Naive thymus-derived CD8-positive, alpha-beta T cell (primary cell): ENCODE measurements at regions of chr17 and their contacts with region 1.

Region 1: DNA sequence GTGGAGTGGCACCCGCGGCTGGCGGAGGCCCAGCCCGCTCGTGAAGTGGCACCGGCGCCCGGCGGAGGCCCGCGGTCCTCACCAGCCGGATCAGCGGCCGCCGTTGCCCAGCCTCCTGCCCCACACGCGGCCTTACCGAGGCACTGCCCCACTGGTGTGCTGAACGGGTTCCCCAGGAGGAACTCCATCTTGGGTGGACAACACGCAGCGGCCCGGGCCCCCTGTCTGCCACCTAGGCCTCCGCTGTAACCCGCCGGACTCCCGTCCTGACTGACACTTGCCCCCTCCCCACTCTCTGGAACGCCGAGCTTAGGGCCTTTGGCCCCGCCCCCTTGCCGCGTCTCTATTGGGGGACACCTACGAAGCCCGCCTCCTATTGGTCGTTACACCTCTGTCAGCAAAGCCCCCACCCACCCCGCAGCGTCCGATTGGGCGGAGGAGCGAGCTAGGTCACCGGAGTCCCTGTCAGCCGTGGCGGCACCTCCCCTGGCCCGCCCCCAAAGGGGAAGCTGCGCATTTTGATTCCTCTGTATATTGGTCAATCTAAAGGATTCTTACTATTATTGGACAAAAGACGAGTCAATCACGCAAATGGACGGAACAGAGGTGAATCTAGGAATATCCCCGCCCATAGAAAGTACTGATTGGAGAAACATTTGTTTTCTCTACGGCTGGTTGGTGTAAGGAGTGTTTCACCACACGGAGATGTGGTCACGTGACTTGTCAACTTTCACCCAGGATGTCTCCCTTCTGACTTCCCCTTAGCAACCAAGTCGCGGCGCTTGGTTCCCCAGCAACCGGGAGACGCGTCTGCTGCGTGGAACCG is at the starts of genes DRC3 and TOM1L2:
- DNase-seq: peak; percentile 97 to 100 (median 100)
- ATAC-seq: peak; percentile 87 to 90
- H3K4me3 Mint-ChIP-seq: peak within 1 kb of the TSS; percentile 89 to 99 (median 95)
- H3K27ac Mint-ChIP-seq: peak within 1 kb of the TSS; percentile 81 to 99 (median 96)
- H3K4me1 Mint-ChIP-seq: peaks cover 20 to 52% (median 48%) of the 10 kb centered on the region in 4 donors
- H3K27me3 Mint-ChIP-seq: no peaks in the 10 kb centered on the region
- polyA plus RNA-seq, gene DRC3: 0.31 to 0.91 TPM in 2 of 3 donors, not detected in the other
- polyA plus RNA-seq, gene TOM1L2: 2.5 to 11.6 (median 7.4) TPM

Region 2: DNA sequence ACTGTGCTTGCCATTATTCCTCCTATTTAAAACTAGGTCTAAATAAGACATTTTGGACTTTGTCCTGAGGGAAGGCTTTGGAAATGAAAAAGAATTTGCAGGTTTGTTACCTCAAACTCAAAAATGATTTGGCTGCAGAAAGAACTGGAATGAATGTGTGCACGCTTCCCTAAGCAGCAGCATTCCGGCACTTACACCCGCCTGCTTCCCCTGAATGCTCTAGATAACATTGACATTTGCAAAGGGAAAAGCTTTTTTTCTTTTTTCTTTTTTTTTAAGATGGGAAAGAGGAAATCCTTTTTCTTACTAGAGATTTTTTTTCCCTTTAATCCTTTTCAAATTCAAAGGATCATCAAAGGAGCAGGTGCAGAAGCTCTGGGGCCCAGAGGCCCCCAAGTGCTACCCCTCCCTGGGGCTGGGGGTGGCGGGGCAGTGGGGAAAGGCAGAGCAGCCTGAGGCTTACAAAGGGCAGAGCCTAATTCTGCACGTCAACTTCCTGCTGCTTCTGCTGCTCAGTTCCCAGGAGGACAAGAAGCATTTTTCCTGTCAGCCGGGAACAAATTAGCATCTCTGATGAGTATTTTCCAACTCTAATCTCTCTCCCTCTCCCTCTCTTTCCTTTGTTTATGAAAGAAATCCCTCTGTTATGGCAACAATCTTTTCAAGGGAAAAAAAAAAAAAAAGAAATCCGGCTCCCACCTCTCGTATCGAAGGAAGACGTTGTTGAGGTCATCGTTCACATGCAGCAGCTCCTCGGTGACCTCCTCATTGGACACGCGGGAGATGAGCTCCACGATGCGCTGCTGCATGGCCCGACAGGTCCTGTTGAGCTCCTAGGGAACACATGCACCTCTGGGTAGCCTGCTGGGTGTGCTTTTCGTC is 103.5 kb before region 1 on chr17:
- POLR2A ChIA-PET with region 1: no interaction called
- DNase-seq: no peak
- ATAC-seq: no peak
- H3K4me3 Mint-ChIP-seq: no peak overlapping the region
- H3K27ac Mint-ChIP-seq: peak overlapping the region in 1 of 10 donors; percentile 58
- H3K4me1 Mint-ChIP-seq: peaks cover 0 to 11% (median 3%) of the 10 kb centered on the region in 4 donors
- H3K27me3 Mint-ChIP-seq: no peaks in the 10 kb centered on the region

Region 3: DNA sequence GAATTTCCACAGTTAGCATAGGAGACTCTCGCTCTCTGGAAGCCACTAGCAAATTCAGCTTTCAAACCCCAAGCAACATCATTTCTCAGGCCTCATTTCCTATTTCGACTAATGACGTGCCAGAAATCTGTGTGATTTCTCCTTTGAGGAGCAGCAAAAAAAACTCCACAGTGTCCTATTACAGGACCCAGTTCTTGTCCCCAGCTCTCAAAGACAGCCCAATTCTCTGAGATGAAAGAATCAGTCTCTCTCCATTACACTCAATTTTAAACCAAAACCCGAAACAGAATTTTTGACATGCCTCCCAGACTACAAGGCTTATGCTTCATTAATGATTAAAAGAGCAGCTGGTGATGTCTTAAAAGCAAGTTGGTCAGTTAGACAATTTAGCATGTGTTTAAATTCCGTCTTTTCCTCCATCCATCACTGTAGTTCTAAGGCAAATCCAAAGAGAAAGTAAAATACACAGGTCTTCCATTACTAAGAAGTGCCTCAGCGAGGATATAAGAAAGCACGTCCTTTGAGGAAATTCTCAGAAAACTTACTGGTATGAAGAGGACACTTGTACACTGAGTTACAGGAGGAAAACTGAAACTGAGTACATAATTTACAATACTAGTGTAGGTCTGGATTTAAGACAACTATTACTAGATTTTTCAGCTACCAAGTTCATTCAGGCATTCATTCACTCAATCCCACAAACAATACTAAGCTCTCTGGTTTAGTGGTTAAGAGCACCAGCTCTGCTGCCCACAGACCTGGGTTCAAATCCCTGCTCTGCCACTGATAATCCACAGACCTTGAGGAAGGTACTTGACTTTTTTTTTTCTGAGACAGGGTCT is 12.6 kb before region 1 on chr17:
- POLR2A ChIA-PET with region 1: interaction called, 130 read pairs
- DNase-seq: peak in 2 of 10 donors; percentile 27 to 31
- ATAC-seq: peak; percentile 15 to 44
- H3K4me3 Mint-ChIP-seq: peak overlapping the region; percentile 70 to 93 (median 82)
- H3K27ac Mint-ChIP-seq: peak overlapping the region; percentile 95 to 99 (median 98)
- H3K4me1 Mint-ChIP-seq: peaks cover 45 to 76% (median 75%) of the 10 kb centered on the region in 4 donors
- H3K27me3 Mint-ChIP-seq: no peaks in the 10 kb centered on the region

Region 4: GRCh38 chr17:17994271-17995069 is 22.1 kb after region 1 on chr17:
- POLR2A ChIA-PET with region 1: no interaction called
- DNase-seq: peak in 9 of 10 donors; percentile 7 to 54 (median 30)
- ATAC-seq: peak; percentile 73 to 78
- H3K4me3 Mint-ChIP-seq: no peak overlapping the region
- H3K27ac Mint-ChIP-seq: peak overlapping the region in 4 of 10 donors; percentile 6 to 73 (median 33)
- H3K4me1 Mint-ChIP-seq: peaks cover 0 to 7% (median 2%) of the 10 kb centered on the region in 4 donors
- H3K27me3 Mint-ChIP-seq: no peaks in the 10 kb centered on the region

Region 5: DNA sequence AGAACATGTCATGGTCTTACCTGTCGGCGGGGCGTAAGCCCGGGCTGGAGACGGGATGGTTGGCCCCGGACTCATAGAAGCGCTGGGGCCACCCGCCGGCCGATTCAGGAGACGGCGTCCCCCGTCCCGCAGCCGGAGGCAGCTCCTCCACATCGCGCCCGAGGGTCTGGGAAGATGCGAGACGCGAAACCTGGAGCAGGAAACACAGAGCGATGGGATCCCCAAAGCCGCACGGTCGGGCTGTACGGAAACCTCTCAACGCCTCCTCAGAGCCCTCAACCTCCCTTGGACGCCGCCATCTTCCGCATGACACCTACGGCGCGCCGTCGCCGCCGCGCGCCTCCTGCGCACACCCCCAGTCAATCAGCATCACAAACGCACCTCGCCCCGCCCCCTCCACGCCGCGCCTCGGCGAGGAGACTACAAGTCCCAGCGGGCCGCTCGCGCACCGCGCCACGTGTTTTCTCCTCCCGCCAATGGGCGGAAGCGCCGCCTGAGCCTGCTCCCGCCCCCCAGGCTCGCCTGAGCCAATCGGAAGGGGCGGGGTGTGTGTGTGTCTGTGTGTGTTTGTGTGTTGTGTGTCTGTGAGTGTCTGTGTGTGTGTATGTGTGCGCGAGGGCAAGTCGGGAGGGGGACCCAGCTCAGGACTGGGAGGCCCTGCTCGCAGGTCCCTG is 66.7 kb after region 1 on chr17 and contains the starts of genes ATPAF2 and GID4:
- POLR2A ChIA-PET with region 1: interaction called, 10 read pairs
- DNase-seq: peak; percentile 97 to 100 (median 100)
- ATAC-seq: peak; percentile 89 to 92
- H3K4me3 Mint-ChIP-seq: peak within 1 kb of the TSS; percentile 85 to 100 (median 98)
- H3K27ac Mint-ChIP-seq: peak within 1 kb of the TSS; percentile 93 to 99 (median 96)
- H3K4me1 Mint-ChIP-seq: peaks cover 33 to 61% (median 56%) of the 10 kb centered on the region in 4 donors
- H3K27me3 Mint-ChIP-seq: no peaks in the 10 kb centered on the region
- polyA plus RNA-seq, gene ATPAF2: 15.3 to 21.8 (median 21.2) TPM
- polyA plus RNA-seq, gene GID4: 3.4 to 7.1 (median 6.0) TPM